CD14-positive monocyte (primary cell): ENCODE measurements at regions of chr7 and their contacts with region 1.

Region 1: GRCh38 chr7:118250860-118251494 is 26.5 kb downstream of the ANKRD7 start:
- DNase-seq: no peak
- H3K4me3 ChIP-seq: no peak overlapping the region
- H3K4me3 Mint-ChIP-seq: no peak overlapping the region
- H3K27ac ChIP-seq: no peak overlapping the region
- H3K27ac Mint-ChIP-seq: no peak overlapping the region
- H3K4me1 ChIP-seq: no peaks in the 10 kb centered on the region
- H3K4me1 Mint-ChIP-seq: no peaks in the 10 kb centered on the region
- H3K27me3 ChIP-seq: peaks cover 0 to 6% of the 10 kb centered on the region in 2 donors
- H3K27me3 Mint-ChIP-seq: peaks cover 2 to 13% (median 4%) of the 10 kb centered on the region in 3 donors
- CTCF ChIP-seq: no peak

Region 2: DNA sequence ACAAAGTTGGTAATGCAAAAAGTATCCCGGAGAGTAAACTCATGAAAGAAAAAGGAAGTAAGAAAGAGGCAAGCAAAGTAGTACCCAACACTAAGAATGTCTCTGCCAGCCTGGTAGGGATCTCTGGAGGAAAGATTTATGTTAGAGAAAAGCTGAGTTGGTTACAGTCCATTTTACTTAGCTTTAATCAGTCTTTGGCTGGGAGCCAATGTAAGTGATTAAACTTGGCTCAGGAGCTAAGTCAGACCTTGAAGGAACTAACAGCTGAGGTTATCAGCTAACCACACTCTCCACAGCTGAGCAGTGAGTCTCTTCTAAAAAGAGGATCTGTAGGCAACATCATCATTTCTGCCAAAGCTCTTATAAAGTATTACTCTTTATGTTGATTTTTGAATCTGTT is 121.6 kb after region 1 on chr7:
- intact Hi-C with region 1: no loop called
- DNase-seq: peak in 2 of 3 donors; percentile 3 to 7
- H3K4me3 ChIP-seq: no peak overlapping the region
- H3K4me3 Mint-ChIP-seq: no peak overlapping the region
- H3K27ac ChIP-seq: no peak overlapping the region
- H3K27ac Mint-ChIP-seq: no peak overlapping the region
- H3K4me1 ChIP-seq: no peaks in the 10 kb centered on the region
- H3K4me1 Mint-ChIP-seq: peaks cover 3% of the 10 kb centered on the region
- H3K27me3 ChIP-seq: peaks cover 27% of the 10 kb centered on the region in 2 donors
- H3K27me3 Mint-ChIP-seq: peaks cover 13 to 43% (median 27%) of the 10 kb centered on the region in 3 donors
- CTCF ChIP-seq: no peak

Region 3: GRCh38 chr7:119175911-119176627 is 925.1 kb after region 1 on chr7:
- intact Hi-C with region 1: loop called (anchors 10 kb)
- DNase-seq: peak in 2 of 3 donors; percentile 13 to 28
- H3K4me3 ChIP-seq: no peak overlapping the region
- H3K4me3 Mint-ChIP-seq: peak overlapping the region in 1 of 2 donors; percentile 17
- H3K27ac ChIP-seq: no peak overlapping the region
- H3K27ac Mint-ChIP-seq: no peak overlapping the region
- H3K4me1 ChIP-seq: no peaks in the 10 kb centered on the region
- H3K4me1 Mint-ChIP-seq: no peaks in the 10 kb centered on the region
- H3K27me3 ChIP-seq: no peaks in the 10 kb centered on the region
- H3K27me3 Mint-ChIP-seq: peaks cover 0 to 2% (median 0%) of the 10 kb centered on the region in 3 donors
- CTCF ChIP-seq: peak; percentile 71

Region 4: DNA sequence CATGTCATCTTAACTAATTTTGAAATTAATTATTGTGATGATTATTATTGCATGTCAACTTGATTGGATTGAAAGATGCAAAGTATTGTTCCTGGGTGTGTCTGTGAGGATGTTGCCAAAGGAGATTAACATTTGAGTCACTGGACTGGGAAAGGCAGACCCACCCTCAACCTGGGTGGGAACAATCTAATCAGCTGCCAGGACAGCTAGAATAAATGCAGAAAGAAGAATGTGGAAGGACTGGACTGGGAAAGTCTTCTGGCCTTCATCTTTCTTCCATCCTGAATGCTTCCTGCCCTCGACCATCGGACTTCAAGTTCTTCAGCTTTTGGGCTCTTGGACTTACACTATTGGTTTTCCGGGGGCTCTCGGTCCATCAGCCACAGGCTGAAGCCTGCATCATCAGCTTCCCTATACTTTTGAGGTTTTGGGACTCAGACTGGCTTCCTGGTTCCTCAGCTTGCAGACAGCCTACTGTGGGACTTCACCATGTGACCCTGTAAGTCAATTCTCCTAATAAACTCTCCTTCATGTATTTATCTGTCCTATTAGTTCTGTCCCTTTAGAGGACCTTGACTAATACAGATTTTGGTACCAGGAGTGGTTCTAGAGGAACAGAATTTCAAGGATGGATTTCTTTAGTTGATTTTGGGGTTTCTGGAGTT is 933.3 kb after region 1 on chr7:
- intact Hi-C with region 1: loop called (anchors 10 kb)
- DNase-seq: no peak
- H3K4me3 ChIP-seq: no peak overlapping the region
- H3K4me3 Mint-ChIP-seq: no peak overlapping the region
- H3K27ac ChIP-seq: no peak overlapping the region
- H3K27ac Mint-ChIP-seq: peak overlapping the region in 1 of 7 donors; percentile 27
- H3K4me1 ChIP-seq: no peaks in the 10 kb centered on the region
- H3K4me1 Mint-ChIP-seq: no peaks in the 10 kb centered on the region
- H3K27me3 ChIP-seq: no peaks in the 10 kb centered on the region
- H3K27me3 Mint-ChIP-seq: peaks cover 0 to 2% (median 1%) of the 10 kb centered on the region in 3 donors
- CTCF ChIP-seq: no peak